Activated T-helper 1 cell treated with anti-CD3 and anti-CD28 coated beads, Interleukin-12 subunit alpha, Interleukin-12 subunit beta, Interleukin-2, Interleukin-4 antibody, amounts not matched to agents 30 ng/mL and 10 ng/mL and 1 ng/mL, durations not matched to agents 14 hours and 24 hours and 36 hours (primary cell): ENCODE measurements at regions of chr1 and their contacts with region 1.

Region 1: GRCh38 chr1:158998781-158999161 is 10.9 kb upstream of the IFI16 start:
- DNase-seq: peak; percentile 40
- H3K4me3 Mint-ChIP-seq: no peak overlapping the region
- H3K27ac Mint-ChIP-seq: no peak overlapping the region
- H3K4me1 Mint-ChIP-seq: peaks cover 38% of the 10 kb centered on the region
- H3K27me3 Mint-ChIP-seq: no peaks in the 10 kb centered on the region

Region 2: DNA sequence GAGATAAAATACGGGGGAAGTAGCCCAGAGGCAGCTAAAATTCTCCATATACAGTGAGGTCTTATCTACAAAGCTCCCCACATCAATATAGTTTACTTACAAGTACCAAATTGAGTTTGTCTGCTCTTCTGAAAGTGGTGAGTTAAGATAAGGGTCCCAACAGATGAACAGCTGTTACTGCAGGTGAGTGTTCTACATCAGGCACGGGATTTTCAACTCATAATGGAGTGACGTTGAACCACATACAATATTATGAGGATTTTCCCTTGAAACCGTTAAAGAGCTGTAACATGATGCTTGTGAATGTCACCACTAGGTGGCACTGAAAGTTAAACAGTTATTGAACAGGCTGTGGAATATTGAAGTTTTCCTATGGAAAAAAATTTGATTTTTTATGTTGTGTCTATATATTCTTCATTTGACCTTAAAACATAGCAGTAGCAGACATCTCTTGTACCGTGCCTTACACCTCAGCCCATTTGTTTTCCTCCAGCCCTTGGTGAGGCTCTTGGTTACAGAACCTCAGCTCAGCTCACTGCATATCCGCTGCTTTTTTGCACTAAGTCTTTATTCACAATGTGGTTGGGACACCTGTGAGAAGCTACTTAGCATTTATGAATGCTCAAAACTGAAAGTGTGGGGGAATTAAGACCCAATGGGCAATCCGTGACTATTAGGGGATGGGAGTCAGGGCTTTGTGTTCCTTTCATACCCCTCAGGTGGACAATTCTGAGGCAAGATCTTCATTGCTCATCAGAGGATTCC is 794.9 kb before region 1 on chr1:
- intact Hi-C with region 1: loop called (anchors 1 kb)
- DNase-seq: no peak
- H3K4me3 Mint-ChIP-seq: no peak overlapping the region
- H3K27ac Mint-ChIP-seq: no peak overlapping the region
- H3K4me1 Mint-ChIP-seq: peaks cover 16% of the 10 kb centered on the region
- H3K27me3 Mint-ChIP-seq: peaks cover 26% of the 10 kb centered on the region

Region 3: GRCh38 chr1:158506369-158506987 is 492.3 kb before region 1 on chr1:
- intact Hi-C with region 1: loop called (anchors 1 kb)
- DNase-seq: peak; percentile 8
- H3K4me3 Mint-ChIP-seq: no peak overlapping the region
- H3K27ac Mint-ChIP-seq: no peak overlapping the region
- H3K4me1 Mint-ChIP-seq: no peaks in the 10 kb centered on the region
- H3K27me3 Mint-ChIP-seq: peaks cover 17% of the 10 kb centered on the region

Region 4: DNA sequence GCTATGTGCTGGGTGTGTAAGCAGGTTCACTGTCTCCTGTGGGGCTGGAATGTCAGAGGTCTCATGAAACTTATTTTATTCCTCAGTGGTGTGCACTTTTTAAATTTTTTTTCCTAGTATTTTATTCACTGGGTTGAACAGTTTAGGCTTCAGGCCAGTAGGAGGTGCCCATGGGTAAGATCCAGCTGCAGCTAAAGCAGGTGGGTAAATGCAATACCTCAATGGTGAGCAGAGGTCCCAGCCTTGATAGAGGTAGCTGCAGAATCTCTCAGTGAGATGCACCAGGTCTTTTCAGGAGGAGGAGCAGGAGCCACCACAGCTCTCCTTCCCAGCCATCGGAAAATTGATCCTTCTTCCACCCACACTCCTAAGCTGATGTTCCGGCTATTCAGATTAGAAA is 205.2 kb before region 1 on chr1:
- intact Hi-C with region 1: loop called (anchors 1 kb)
- DNase-seq: peak; percentile 14
- H3K4me3 Mint-ChIP-seq: no peak overlapping the region
- H3K27ac Mint-ChIP-seq: no peak overlapping the region
- H3K4me1 Mint-ChIP-seq: no peaks in the 10 kb centered on the region
- H3K27me3 Mint-ChIP-seq: peaks cover 20% of the 10 kb centered on the region

Region 5: GRCh38 chr1:159071970-159072582 is 73.3 kb after region 1 on chr1:
- intact Hi-C with region 1: loop called (anchors 1 kb)
- DNase-seq: no peak
- H3K4me3 Mint-ChIP-seq: peak overlapping the region; percentile 12
- H3K27ac Mint-ChIP-seq: peak overlapping the region; percentile 37
- H3K4me1 Mint-ChIP-seq: peaks cover 70% of the 10 kb centered on the region
- H3K27me3 Mint-ChIP-seq: no peaks in the 10 kb centered on the region